ENCODE measurements at regions of chr10 and their contacts with region 1.

Region 1: DNA sequence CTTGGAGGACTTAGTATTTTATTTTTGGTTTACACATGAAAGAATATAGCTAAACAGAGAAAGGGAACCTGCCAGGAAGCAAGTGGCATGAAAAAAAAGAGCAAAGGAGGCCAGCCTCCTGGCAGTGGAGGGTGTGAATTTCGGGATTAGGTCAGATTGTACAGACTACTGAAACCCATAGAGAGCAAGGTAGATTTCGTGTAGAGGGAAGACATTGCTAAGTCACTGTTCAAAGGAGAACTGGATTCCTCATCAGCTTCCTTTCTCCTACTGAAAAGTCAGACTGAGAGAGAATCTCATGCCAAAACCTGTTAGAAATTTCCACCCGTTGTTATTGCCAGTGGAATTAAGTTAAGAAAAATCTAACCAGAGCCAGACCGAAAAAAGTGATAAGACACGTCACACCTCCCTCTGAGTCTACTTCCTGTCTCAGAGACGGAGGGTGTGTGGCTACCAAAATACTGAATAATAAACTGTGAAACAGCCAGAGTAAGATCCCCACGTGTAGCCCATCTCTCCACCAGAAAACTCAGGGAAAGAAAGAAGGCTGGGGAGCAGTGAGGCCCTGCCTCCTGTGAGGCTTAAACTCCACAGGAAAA is 118.8 kb downstream of the SKIDA1 start:
- DNase-seq: peak; percentile 62
- ATAC-seq: peak; percentile 69
- H3K4me3 ChIP-seq: no peak overlapping the region
- H3K27ac ChIP-seq: no peak overlapping the region
- H3K4me1 ChIP-seq: peaks cover 6% of the 10 kb centered on the region
- H3K27me3 ChIP-seq: no peaks in the 10 kb centered on the region
- CTCF ChIP-seq: no peak
- POLR2A ChIP-seq: no peak
- RAD21 ChIP-seq: no peak

Region 2: DNA sequence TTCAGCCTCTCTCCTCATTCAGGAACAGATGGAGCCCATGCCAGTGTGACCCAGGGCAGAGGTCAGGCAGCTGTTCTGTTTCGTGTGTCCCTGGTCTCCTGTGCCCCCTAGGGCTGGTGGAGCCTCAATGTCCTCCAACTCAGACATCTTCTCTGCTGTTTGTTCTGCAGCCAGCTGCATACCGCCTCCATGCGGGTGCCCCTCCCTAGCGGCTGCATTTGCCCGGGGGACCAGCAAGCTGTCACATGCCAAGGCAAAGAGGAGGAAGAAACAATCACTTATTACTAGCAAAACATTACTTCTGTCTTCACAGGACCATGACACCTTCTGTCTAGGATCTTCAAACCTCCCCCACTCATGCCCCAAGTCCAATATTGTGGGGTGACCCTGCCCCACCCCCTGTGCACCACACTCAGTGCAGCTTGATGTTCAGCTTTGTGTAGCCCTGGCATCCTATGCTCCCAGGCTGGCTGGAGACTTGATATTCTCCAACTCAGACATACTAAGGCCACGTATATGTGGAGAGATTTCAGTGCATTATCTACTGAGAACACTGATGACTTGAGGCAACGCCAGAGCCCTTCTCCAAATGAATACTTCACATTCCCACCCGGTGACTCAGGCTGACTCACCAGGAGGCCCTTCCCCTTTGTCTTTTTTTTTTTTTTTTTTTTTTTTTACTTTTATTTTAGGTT is 70.1 kb before region 1 on chr10:
- CTCF ChIA-PET with region 1: no interaction called
- POLR2A ChIA-PET with region 1: no interaction called
- dilution Hi-C with region 1: no loop called
- in situ Hi-C with region 1: no loop called
- intact Hi-C with region 1: loop called (anchors 2 kb)
- DNase-seq: peak; percentile 97
- ATAC-seq: peak; percentile 77
- H3K4me3 ChIP-seq: no peak overlapping the region
- H3K27ac ChIP-seq: peak overlapping the region; percentile 77
- H3K4me1 ChIP-seq: peaks cover 9% of the 10 kb centered on the region
- H3K27me3 ChIP-seq: no peaks in the 10 kb centered on the region
- CTCF ChIP-seq: no peak
- POLR2A ChIP-seq: no peak
- RAD21 ChIP-seq: peak; percentile 19; the same call in 1 of the 2 replicates

Region 3: DNA sequence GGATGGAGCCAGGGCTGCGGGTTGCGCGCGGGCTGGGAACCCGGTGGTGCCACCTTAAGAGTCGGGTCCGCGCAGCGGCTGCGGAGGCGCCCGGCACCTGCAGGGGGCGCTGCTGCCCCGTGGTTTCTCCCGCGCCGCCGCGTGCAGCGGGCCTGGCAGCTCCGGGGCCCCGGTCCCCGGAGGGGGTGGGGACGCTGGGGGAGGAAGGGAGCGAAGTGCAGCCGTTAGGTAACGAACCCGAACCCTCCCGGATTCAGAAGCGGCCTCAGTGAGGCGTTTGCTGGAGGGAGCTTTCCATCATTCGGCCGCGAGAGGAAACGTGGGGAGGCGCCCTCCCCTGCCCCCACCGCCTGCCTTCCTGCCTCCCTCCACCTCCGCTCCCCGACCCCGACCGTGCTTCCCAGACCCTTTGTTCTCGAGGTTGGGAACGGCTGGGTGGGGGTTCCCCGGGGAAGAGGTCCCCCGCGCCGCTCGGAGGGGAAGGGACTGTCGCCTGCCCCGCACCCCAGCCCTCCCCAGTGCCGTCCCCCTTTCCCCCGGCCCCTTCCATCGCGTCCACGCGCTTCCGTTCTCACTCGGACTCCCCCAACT is 89.2 kb after region 1 on chr10:
- CTCF ChIA-PET with region 1: no interaction called
- POLR2A ChIA-PET with region 1: no interaction called
- dilution Hi-C with region 1: no loop called
- in situ Hi-C with region 1: no loop called
- intact Hi-C with region 1: no loop called
- DNase-seq: peak; percentile 77
- ATAC-seq: peak; percentile 80
- H3K4me3 ChIP-seq: peak overlapping the region; percentile 91
- H3K27ac ChIP-seq: peak overlapping the region; percentile 81
- H3K4me1 ChIP-seq: peaks cover 3% of the 10 kb centered on the region; the same call in 1 of the 2 replicates
- H3K27me3 ChIP-seq: peaks cover 5% of the 10 kb centered on the region
- CTCF ChIP-seq: peak; percentile 98
- POLR2A ChIP-seq: no peak
- RAD21 ChIP-seq: peak; percentile 95

Region 4: DNA sequence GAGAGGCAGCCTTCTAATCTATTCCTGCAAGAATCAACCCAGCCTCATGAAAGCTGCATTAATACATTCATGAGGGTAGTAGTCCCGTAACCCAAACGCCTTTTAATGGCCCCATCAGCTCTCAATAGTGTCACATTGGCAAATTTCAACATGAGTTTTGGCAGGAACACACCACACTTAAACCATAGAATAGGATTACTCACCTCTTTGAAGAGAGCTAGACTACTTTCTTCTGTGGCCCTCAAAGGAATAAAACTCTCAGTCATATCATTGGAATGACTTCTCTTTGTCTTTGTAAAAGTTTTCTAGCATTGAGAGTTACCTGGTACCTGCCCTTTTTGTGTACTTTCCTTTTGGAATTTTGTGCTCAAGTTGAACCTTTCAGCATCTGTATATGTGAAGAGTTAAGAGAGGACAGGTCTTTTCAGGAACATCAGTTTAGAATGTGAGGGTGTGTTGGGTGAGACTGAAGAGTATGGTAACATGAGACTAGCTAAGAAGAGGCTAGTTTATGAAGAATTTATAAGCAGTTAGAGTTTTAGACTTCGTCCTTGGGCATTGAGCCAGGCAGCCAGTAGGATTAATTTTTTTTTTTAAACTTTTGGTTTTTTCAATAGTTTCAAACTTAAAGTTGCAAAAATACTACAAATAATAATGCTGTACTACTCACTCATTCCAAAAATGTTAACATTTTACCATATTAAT is 219.9 kb after region 1 on chr10:
- CTCF ChIA-PET with region 1: no interaction called
- POLR2A ChIA-PET with region 1: no interaction called
- dilution Hi-C with region 1: no loop called
- in situ Hi-C with region 1: no loop called
- intact Hi-C with region 1: no loop called
- DNase-seq: peak; percentile 40
- ATAC-seq: peak; percentile 62
- H3K4me3 ChIP-seq: no peak overlapping the region
- H3K27ac ChIP-seq: no peak overlapping the region
- H3K4me1 ChIP-seq: peaks cover 5% of the 10 kb centered on the region
- H3K27me3 ChIP-seq: no peaks in the 10 kb centered on the region
- CTCF ChIP-seq: no peak
- POLR2A ChIP-seq: no peak
- RAD21 ChIP-seq: no peak

Region 5: GRCh38 chr10:21907436-21907835 is 500.7 kb after region 1 on chr10:
- CTCF ChIA-PET with region 1: no interaction called
- POLR2A ChIA-PET with region 1: no interaction called
- dilution Hi-C with region 1: no loop called
- in situ Hi-C with region 1: no loop called
- intact Hi-C with region 1: no loop called
- DNase-seq: no peak
- ATAC-seq: no peak
- H3K4me3 ChIP-seq: no peak overlapping the region
- H3K27ac ChIP-seq: no peak overlapping the region
- H3K4me1 ChIP-seq: no peaks in the 10 kb centered on the region
- H3K27me3 ChIP-seq: no peaks in the 10 kb centered on the region
- CTCF ChIP-seq: no peak
- POLR2A ChIP-seq: no peak
- RAD21 ChIP-seq: no peak